GM18951 (cell line): ENCODE measurements at regions of chr16 and their contacts with region 1.

Region 1: GRCh38 chr16:78122774-78123315 is 23.4 kb downstream of the WWOX start:
- POLR2A ChIP-seq: no peak

Region 2: DNA sequence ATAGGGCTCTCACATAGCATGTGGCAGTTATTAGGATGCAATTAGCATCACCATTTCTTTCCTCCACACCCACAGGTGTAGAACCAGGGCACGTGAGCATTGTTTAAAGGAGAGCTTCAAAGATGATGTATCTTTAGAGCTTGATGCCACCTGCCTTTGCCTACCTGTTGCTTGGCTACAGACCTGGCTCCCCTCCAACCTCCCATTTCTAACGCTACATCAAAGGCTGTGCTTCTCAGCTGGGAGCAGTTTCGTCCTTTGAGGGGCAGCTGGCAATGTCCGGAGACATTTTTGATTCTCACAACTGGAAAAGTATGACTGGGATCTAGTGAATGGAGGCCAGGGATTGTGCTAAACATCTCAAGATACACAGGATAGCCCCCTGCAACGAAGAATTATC is 179.0 kb before region 1 on chr16:
- in situ Hi-C with region 1: no loop called
- POLR2A ChIP-seq: no peak

Region 3: DNA sequence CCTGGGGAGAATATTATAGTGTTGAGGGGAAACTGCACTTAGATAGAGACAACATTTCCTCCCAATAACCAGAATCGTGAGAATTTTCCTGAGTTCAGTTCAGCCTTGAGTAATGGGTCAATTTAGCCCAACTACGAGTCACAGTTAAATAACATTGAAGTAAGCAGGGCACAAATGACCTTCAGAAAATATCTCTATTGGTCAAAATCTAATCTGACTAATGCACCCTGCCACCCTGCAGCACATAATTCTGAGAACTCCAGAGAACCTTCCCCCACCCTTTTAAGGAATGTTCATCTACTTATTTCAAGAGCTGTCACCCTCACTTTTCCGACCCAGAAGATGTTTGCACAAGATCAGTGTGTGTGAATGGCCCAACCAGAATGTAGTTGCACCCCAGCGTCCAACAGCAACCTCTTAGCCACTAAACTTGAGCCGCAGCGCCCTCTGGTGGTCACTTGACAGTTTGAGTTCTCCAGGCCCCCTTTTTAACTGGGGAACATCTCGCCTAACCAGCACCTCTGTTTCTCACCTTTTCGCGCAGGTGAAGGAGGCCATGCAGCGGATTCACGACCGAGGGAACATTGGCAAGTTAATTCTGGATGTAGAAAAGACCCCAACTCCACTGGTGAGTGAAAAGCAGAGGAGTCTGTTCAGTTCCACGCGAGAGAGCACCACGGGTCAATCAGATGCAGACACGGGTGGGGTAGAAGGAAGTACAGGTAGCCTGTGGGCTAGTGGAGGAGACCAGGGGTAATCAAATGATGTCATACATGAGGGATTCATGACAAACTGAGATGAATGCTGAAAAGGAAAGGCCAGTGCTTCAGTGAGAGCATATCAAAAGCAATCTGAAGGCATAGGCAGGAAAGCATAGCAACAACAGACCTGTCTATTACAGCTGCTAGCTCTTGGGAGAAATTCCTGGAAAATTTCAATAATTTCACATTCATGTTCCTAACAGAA is 151.3 kb before region 1 on chr16:
- in situ Hi-C with region 1: no loop called
- POLR2A ChIP-seq: no peak

Region 4: GRCh38 chr16:78235168-78235800 is 112.4 kb after region 1 on chr16:
- in situ Hi-C with region 1: loop called (anchors 10 kb)
- POLR2A ChIP-seq: no peak